ENCODE measurements at regions of chr14 and their contacts with region 1.

Region 1: GRCh38 chr14:102694530-102695166 is 82.6 kb upstream of the TRAF3 start:
- DNase-seq: peak; percentile 77
- H3K4me3 ChIP-seq: no peak overlapping the region
- H3K27ac ChIP-seq: no peak overlapping the region
- H3K4me1 ChIP-seq: peaks cover 13% of the 10 kb centered on the region
- H3K27me3 ChIP-seq: no peaks in the 10 kb centered on the region
- CTCF ChIP-seq: peak; percentile 50 to 60
- POLR2A ChIP-seq: no peak

Region 2: DNA sequence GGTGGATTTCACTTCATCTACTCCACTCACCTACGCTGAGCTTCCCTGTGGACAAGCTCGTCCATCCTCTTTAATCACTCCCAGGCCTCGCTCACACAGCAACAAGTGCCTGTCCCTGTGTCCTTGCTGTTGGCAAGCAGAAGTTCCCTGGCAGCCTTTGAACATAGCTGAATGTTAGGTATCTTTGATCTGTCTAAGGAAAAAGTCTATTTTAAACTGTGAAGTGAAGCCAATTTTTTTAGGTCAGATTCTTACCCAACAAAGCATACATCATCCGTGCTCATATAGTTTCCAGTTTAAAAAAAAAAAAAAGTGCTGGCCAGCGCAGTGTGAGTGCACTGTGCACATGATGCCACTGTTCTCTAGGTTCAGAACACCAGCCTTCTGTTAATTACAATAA is 896.8 kb before region 1 on chr14:
- CTCF ChIA-PET with region 1: no interaction called
- POLR2A ChIA-PET with region 1: no interaction called
- dilution Hi-C with region 1: no loop called
- intact Hi-C with region 1: no loop called
- DNase-seq: no peak
- H3K4me3 ChIP-seq: no peak overlapping the region
- H3K27ac ChIP-seq: no peak overlapping the region
- H3K4me1 ChIP-seq: no peaks in the 10 kb centered on the region
- H3K27me3 ChIP-seq: peaks cover 9 to 25% of the 10 kb centered on the region in 2 experiments
- CTCF ChIP-seq: no peak
- POLR2A ChIP-seq: no peak

Region 3: GRCh38 chr14:102437997-102438915 is 256.4 kb before region 1 on chr14:
- CTCF ChIA-PET with region 1: interaction called, 17 read pairs
- POLR2A ChIA-PET with region 1: no interaction called
- dilution Hi-C with region 1: no loop called
- intact Hi-C with region 1: loop called (anchors 2 kb)
- DNase-seq: peak; percentile 73
- H3K4me3 ChIP-seq: peak overlapping the region in 1 of 3 experiments; percentile 13
- H3K27ac ChIP-seq: no peak overlapping the region
- H3K4me1 ChIP-seq: peaks cover 2% of the 10 kb centered on the region
- H3K27me3 ChIP-seq: no peaks in the 10 kb centered on the region
- CTCF ChIP-seq: peak; percentile 79 to 84
- POLR2A ChIP-seq: no peak

Region 4: GRCh38 chr14:102629808-102630350 is 64.8 kb before region 1 on chr14:
- CTCF ChIA-PET with region 1: interaction called, 13 read pairs
- POLR2A ChIA-PET with region 1: interaction called, 4 read pairs
- dilution Hi-C with region 1: no loop called
- intact Hi-C with region 1: no loop called
- DNase-seq: no peak
- H3K4me3 ChIP-seq: no peak overlapping the region
- H3K27ac ChIP-seq: peak overlapping the region; percentile 77
- H3K4me1 ChIP-seq: peaks cover 34% of the 10 kb centered on the region
- H3K27me3 ChIP-seq: no peaks in the 10 kb centered on the region
- CTCF ChIP-seq: no peak
- POLR2A ChIP-seq: no peak

Region 5: DNA sequence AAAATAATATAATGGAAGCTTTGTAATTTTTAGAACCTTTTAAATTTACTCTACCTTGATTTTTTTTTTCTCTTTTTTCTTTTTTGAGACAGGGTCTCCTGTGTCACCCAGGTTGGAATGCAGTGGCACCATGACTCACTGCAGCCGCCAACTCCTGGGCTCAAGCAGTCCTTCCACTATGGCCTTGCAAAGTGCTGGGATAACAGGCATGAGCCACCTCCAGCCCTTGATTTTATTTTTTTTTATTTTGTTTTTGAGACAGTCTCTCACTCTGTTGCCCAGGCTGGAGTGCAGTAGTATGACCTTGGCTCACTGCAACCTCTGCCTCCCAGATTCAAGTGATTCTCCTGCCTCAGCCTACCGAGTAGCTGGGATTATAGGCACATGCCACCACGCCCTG is 17.3 kb after region 1 on chr14:
- CTCF ChIA-PET with region 1: interaction called, 16 read pairs
- POLR2A ChIA-PET with region 1: interaction called, 4 read pairs
- dilution Hi-C with region 1: no loop called
- intact Hi-C with region 1: no loop called
- DNase-seq: no peak
- H3K4me3 ChIP-seq: no peak overlapping the region
- H3K27ac ChIP-seq: no peak overlapping the region
- H3K4me1 ChIP-seq: no peaks in the 10 kb centered on the region
- H3K27me3 ChIP-seq: no peaks in the 10 kb centered on the region
- CTCF ChIP-seq: no peak
- POLR2A ChIP-seq: no peak

Region 6: GRCh38 chr14:102774391-102775153 is 79.9 kb after region 1 on chr14:
- CTCF ChIA-PET with region 1: interaction called, 77 read pairs
- POLR2A ChIA-PET with region 1: no interaction called
- dilution Hi-C with region 1: no loop called
- intact Hi-C with region 1: loop called (anchors 1 kb)
- DNase-seq: peak; percentile 69
- H3K4me3 ChIP-seq: no peak overlapping the region
- H3K27ac ChIP-seq: no peak overlapping the region
- H3K4me1 ChIP-seq: peaks cover 16% of the 10 kb centered on the region
- H3K27me3 ChIP-seq: no peaks in the 10 kb centered on the region
- CTCF ChIP-seq: peak; percentile 66 to 86
- POLR2A ChIP-seq: no peak

Region 7: GRCh38 chr14:102924632-102925588 is 230.3 kb after region 1 on chr14:
- CTCF ChIA-PET with region 1: interaction called, 29 read pairs
- POLR2A ChIA-PET with region 1: no interaction called
- dilution Hi-C with region 1: no loop called
- intact Hi-C with region 1: no loop called
- DNase-seq: no peak
- H3K4me3 ChIP-seq: no peak overlapping the region
- H3K27ac ChIP-seq: no peak overlapping the region
- H3K4me1 ChIP-seq: peaks cover 17% of the 10 kb centered on the region
- H3K27me3 ChIP-seq: peaks cover 49 to 66% of the 10 kb centered on the region in 2 experiments
- CTCF ChIP-seq: no peak
- POLR2A ChIP-seq: no peak

Region 8: GRCh38 chr14:102993529-102993928 is 298.9 kb after region 1 on chr14:
- CTCF ChIA-PET with region 1: no interaction called
- POLR2A ChIA-PET with region 1: no interaction called
- dilution Hi-C with region 1: no loop called
- intact Hi-C with region 1: no loop called
- DNase-seq: peak; percentile 49
- H3K4me3 ChIP-seq: no peak overlapping the region
- H3K27ac ChIP-seq: no peak overlapping the region
- H3K4me1 ChIP-seq: peaks cover 12% of the 10 kb centered on the region
- H3K27me3 ChIP-seq: no peaks in the 10 kb centered on the region
- CTCF ChIP-seq: no peak
- POLR2A ChIP-seq: no peak